SK-N-SH (cell line): ENCODE measurements at regions of chr9 and their contacts with region 1.

Region 1: GRCh38 chr9:121545875-121546423 is 46.3 kb upstream of the GGTA1 start:
- DNase-seq: peak; percentile 98
- H3K4me3 ChIP-seq: peak overlapping the region; percentile 20 to 50; a peak in 2 of 4 replicates
- H3K27ac ChIP-seq: no peak overlapping the region
- H3K4me1 ChIP-seq: peaks cover 0 to 8% of the 10 kb centered on the region in 2 experiments; a peak in 1 of 4 replicates
- H3K27me3 ChIP-seq: no peaks in the 10 kb centered on the region
- CTCF ChIP-seq: peak; percentile 88
- EP300 ChIP-seq: no peak
- RAD21 ChIP-seq: peak; percentile 97

Region 2: GRCh38 chr9:121222524-121223171 is 323.3 kb before region 1 on chr9:
- CTCF ChIA-PET with region 1: no interaction called
- POLR2A ChIA-PET with region 1: no interaction called
- DNase-seq: peak; percentile 42
- H3K4me3 ChIP-seq: no peak overlapping the region; a peak in 1 of 4 replicates
- H3K27ac ChIP-seq: no peak overlapping the region
- H3K4me1 ChIP-seq: no peaks in the 10 kb centered on the region; a peak in 1 of 4 replicates
- H3K27me3 ChIP-seq: no peaks in the 10 kb centered on the region
- CTCF ChIP-seq: peak; percentile 90
- EP300 ChIP-seq: no peak
- RAD21 ChIP-seq: peak; percentile 59

Region 3: GRCh38 chr9:121439711-121440664 is 106.0 kb before region 1 on chr9:
- CTCF ChIA-PET with region 1: no interaction called
- POLR2A ChIA-PET with region 1: no interaction called
- DNase-seq: peak; percentile 33
- H3K4me3 ChIP-seq: no peak overlapping the region; a peak in 1 of 4 replicates
- H3K27ac ChIP-seq: no peak overlapping the region
- H3K4me1 ChIP-seq: no peaks in the 10 kb centered on the region
- H3K27me3 ChIP-seq: peaks cover 17% of the 10 kb centered on the region; the same call in 1 of the 2 replicates
- CTCF ChIP-seq: peak; percentile 53
- EP300 ChIP-seq: no peak
- RAD21 ChIP-seq: peak; percentile 45

Region 4: DNA sequence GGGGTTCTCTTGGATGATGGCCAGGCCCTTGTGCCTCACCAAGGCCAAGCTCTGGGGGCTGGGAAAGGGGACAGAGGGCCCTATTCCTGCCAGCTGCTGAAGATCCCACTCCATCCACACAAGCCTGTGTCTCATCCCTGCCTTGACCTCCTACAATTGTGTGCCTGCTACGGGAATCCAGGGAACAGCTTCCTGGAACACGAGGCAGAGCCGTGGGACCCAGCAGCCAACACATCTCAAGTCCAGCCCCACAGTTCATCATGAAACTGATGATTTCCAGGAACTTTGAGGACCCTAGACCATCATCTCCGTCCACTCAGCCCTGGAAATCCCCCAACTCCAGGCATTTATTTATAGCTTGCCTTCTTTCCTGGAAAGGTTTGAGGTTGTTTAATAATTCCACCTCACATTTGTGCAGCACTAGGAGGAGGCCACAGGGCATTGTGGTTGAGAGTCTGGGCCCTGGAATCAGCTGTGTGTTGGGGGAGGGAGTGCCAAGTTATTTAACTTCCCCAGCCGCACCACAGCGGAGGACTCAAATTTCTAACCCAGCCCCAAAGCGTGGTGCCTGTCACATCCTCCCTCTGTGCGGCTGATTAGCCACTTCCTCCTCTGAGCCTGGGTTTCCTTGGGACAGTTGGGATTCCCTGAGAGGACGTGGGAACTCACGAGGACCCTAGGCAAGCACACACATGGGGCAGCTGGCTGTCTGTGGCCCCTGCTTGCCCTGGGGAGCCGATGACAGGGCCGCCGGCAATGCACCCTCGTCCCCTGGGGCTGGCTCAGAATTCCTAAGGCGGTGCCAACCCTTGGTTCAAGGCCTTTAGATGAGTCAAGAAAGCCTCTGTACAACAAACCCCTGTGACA is 11.9 kb after region 1 on chr9:
- CTCF ChIA-PET with region 1: interaction called, 31 read pairs
- POLR2A ChIA-PET with region 1: no interaction called
- DNase-seq: no peak
- H3K4me3 ChIP-seq: 0 out of 4 replicates have a peak overlapping the region, but pooled peaks of 1 of the 2 experiments have one; percentile 17
- H3K27ac ChIP-seq: peak overlapping the region; percentile 70 to 86
- H3K4me1 ChIP-seq: peaks cover 17 to 23% of the 10 kb centered on the region in 2 experiments; a peak in 3 of 4 replicates
- H3K27me3 ChIP-seq: no peaks in the 10 kb centered on the region
- CTCF ChIP-seq: no peak
- EP300 ChIP-seq: 0 out of 4 replicates have a peak, but pooled peaks of 1 of the 2 experiments have one; percentile 34
- RAD21 ChIP-seq: no peak

Region 5: DNA sequence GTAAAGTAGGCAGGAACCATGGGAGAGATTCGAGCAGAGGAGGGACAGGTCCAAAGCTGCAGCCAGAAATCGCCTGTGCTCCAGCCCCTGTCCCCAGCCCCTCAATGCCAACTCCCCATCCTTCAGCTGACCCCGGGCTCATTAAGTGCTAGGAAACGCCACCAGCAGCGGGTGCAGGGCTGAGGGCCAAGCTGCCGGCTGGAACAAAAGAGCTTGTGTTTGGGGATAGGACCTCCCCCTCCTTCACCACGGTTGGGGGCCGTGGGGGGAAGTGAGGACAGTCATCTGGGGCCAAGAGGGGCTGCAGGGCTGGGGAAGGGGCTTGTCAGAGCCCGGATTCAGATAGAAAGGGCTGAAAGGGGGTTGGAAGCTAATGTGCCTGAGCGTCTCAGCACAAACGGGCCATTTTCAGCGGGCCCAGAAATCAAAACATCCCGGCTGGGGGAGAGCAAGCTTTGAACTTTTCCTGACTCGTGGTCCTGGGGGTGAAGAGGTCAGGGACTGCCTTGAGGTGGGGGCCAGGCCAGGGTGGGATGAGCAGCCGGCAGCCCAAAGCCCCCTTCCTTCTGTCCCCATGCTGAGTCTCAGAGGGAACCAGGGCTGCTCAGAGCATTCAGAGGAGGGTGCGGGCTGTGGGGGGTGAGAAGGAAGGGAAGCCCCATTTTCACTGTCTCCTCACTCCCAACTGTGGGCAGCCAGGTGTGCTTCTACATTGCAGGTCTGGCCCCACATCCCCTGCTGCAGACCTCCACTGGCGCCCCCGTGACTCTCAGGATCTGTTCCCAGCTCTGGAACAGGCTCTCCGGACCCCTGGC is 36.0 kb after region 1 on chr9:
- CTCF ChIA-PET with region 1: interaction called, 17 read pairs
- POLR2A ChIA-PET with region 1: no interaction called
- DNase-seq: no peak
- H3K4me3 ChIP-seq: no peak overlapping the region
- H3K27ac ChIP-seq: no peak overlapping the region
- H3K4me1 ChIP-seq: peaks cover 0 to 10% of the 10 kb centered on the region in 2 experiments; a peak in 1 of 4 replicates
- H3K27me3 ChIP-seq: no peaks in the 10 kb centered on the region
- CTCF ChIP-seq: no peak
- EP300 ChIP-seq: no peak
- RAD21 ChIP-seq: no peak

Region 6: DNA sequence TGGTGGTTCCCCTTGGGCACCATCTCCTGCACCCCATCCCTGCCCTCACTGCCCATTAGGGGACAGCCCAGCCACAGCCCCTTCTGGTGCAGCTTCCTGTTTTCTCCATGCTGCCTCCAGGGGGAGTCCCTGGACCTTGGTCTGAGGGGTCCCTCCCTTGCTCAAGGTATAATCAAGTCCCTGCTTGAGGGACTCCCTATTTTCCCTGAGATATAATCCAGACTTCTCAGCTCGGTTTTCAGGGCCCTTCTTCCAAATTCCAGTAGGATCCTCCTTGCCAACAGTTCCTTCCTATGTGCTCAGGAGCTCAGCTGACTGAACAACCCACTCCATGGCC is 75.1 kb after region 1 on chr9:
- CTCF ChIA-PET with region 1: interaction called, 11 read pairs
- POLR2A ChIA-PET with region 1: no interaction called
- DNase-seq: peak; percentile 79
- H3K4me3 ChIP-seq: no peak overlapping the region; a peak in 1 of 4 replicates
- H3K27ac ChIP-seq: no peak overlapping the region
- H3K4me1 ChIP-seq: peaks cover 0 to 20% of the 10 kb centered on the region in 2 experiments; a peak in 1 of 4 replicates
- H3K27me3 ChIP-seq: no peaks in the 10 kb centered on the region
- CTCF ChIP-seq: peak; percentile 64
- EP300 ChIP-seq: no peak
- RAD21 ChIP-seq: peak; percentile 69

Region 7: GRCh38 chr9:121650217-121651007 is 104.5 kb after region 1 on chr9:
- CTCF ChIA-PET with region 1: interaction called, 19 read pairs
- POLR2A ChIA-PET with region 1: no interaction called
- DNase-seq: peak; percentile 91
- H3K4me3 ChIP-seq: no peak overlapping the region
- H3K27ac ChIP-seq: peak overlapping the region in 1 of 2 experiments; percentile 94; a peak in 3 of 4 replicates
- H3K4me1 ChIP-seq: peaks cover 12 to 74% of the 10 kb centered on the region in 2 experiments
- H3K27me3 ChIP-seq: no peaks in the 10 kb centered on the region
- CTCF ChIP-seq: no peak
- EP300 ChIP-seq: peak; percentile 40 to 53; a peak in 2 of 4 replicates
- RAD21 ChIP-seq: peak; percentile 23; the same call in 1 of the 2 replicates

Region 8: GRCh38 chr9:121698627-121699570 is 152.9 kb after region 1 on chr9:
- CTCF ChIA-PET with region 1: interaction called, 33 read pairs
- POLR2A ChIA-PET with region 1: interaction called, 5 read pairs
- DNase-seq: peak; percentile 96
- H3K4me3 ChIP-seq: peak overlapping the region; percentile 75 to 76
- H3K27ac ChIP-seq: peak overlapping the region; percentile 33 to 87; a peak in 3 of 4 replicates
- H3K4me1 ChIP-seq: peaks cover 0 to 51% of the 10 kb centered on the region in 2 experiments; a peak in 1 of 4 replicates
- H3K27me3 ChIP-seq: no peaks in the 10 kb centered on the region
- CTCF ChIP-seq: no peak
- EP300 ChIP-seq: no peak
- RAD21 ChIP-seq: no peak

Region 9: DNA sequence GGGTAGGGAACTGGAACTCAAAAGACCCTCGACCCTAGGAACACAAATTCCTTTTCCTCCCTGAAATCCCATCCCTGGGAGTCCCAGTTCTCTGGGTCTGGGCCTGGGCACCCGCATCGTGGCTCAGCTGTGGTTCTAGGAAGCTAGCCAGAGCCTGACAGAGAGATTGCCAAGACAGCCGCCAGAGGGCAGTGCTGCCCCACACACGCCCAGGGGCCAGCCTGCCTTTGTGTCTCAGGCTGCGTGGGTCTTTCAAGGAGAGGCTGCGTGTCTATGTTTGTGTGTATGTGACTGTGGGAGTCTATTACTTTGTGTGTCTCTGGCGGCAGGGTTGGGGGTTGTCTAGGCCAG is 579.2 kb after region 1 on chr9:
- CTCF ChIA-PET with region 1: interaction called, 26 read pairs
- POLR2A ChIA-PET with region 1: no interaction called
- DNase-seq: peak; percentile 92
- H3K4me3 ChIP-seq: peak overlapping the region in 1 of 2 experiments; percentile 37; a peak in 1 of 4 replicates
- H3K27ac ChIP-seq: no peak overlapping the region
- H3K4me1 ChIP-seq: peaks cover 6 to 8% of the 10 kb centered on the region in 2 experiments; a peak in 2 of 4 replicates
- H3K27me3 ChIP-seq: no peaks in the 10 kb centered on the region
- CTCF ChIP-seq: peak; percentile 94
- EP300 ChIP-seq: no peak
- RAD21 ChIP-seq: peak; percentile 96